ENCODE measurements at regions of chr7 and their contacts with region 1.

Region 1: GRCh38 chr7:31122649-31123058 is 70.5 kb downstream of the ADCYAP1R1 start:
- DNase-seq: peak; percentile 74 to 75
- H3K4me3 ChIP-seq: no peak overlapping the region
- H3K27ac ChIP-seq: no peak overlapping the region
- H3K4me1 ChIP-seq: peaks cover 0 to 3% (median 1%) of the 10 kb centered on the region in 4 experiments; a peak in 4 of 7 replicates
- H3K27me3 ChIP-seq: no peaks in the 10 kb centered on the region; a peak in 2 of 7 replicates
- CTCF ChIP-seq: peak; percentile 68 to 95 (median 87)
- EP300 ChIP-seq: no peak
- POLR2A ChIP-seq: no peak
- RAD21 ChIP-seq: peak; percentile 93 to 96

Region 2: GRCh38 chr7:30920584-30921539 is 201.8 kb before region 1 on chr7:
- CTCF ChIA-PET with region 1: interaction called, 10 read pairs
- POLR2A ChIA-PET with region 1: no interaction called
- DNase-seq: peak in 1 of 2 experiments; percentile 37
- H3K4me3 ChIP-seq: no peak overlapping the region
- H3K27ac ChIP-seq: no peak overlapping the region
- H3K4me1 ChIP-seq: peaks cover 0 to 3% (median 0%) of the 10 kb centered on the region in 4 experiments; a peak in 1 of 7 replicates
- H3K27me3 ChIP-seq: no peaks in the 10 kb centered on the region; a peak in 1 of 7 replicates
- CTCF ChIP-seq: no peak
- EP300 ChIP-seq: no peak
- POLR2A ChIP-seq: no peak
- RAD21 ChIP-seq: no peak

Region 3: DNA sequence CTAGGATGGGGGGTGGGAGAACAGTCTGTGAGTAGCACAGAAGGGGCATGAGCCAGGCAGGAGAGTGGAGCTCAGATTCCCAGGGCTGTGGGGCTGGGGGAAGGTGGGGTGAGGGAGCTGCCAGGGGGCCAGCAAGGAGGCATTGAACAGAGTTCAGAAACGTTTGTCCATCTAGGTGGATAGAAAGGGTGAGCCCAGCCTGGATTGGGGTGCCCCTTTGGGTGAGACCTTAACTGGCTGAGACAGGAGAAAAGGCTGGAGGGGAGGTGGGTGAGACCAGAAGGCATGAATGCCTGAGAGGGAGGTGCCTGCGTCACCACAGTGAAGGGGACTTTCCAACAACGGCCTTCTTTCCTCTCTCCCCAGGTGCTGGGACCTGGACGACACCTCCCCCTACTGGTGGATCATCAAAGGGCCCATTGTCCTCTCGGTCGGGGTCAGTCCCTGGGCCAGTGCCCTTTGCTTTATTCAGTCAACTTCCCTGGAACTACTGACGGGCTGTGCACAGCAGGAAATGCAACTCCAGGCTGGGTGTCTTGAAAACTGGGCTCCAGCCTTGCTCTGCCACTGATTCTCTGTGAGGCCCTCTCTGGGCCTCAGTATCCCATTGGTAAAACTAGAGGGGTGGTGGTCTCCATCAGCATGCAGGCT is 147.9 kb before region 1 on chr7:
- CTCF ChIA-PET with region 1: interaction called, 517 read pairs
- POLR2A ChIA-PET with region 1: no interaction called
- DNase-seq: peak; percentile 36 to 87
- H3K4me3 ChIP-seq: no peak overlapping the region
- H3K27ac ChIP-seq: no peak overlapping the region
- H3K4me1 ChIP-seq: peaks cover 0 to 7% (median 4%) of the 10 kb centered on the region in 4 experiments; a peak in 4 of 7 replicates
- H3K27me3 ChIP-seq: no peaks in the 10 kb centered on the region; a peak in 2 of 7 replicates
- CTCF ChIP-seq: peak; percentile 91 to 94 (median 91)
- EP300 ChIP-seq: peak in 1 of 2 experiments; percentile 68; a peak in 1 of 3 replicates
- POLR2A ChIP-seq: no peak
- RAD21 ChIP-seq: peak; percentile 85 to 87

Region 4: GRCh38 chr7:31027161-31027965 is 95.3 kb before region 1 on chr7:
- CTCF ChIA-PET with region 1: interaction called, 13 read pairs
- POLR2A ChIA-PET with region 1: interaction called, 3 read pairs
- DNase-seq: peak in 1 of 2 experiments; percentile 55
- H3K4me3 ChIP-seq: no peak overlapping the region
- H3K27ac ChIP-seq: no peak overlapping the region
- H3K4me1 ChIP-seq: peaks cover 3 to 14% (median 10%) of the 10 kb centered on the region in 4 experiments
- H3K27me3 ChIP-seq: no peaks in the 10 kb centered on the region
- CTCF ChIP-seq: no peak
- EP300 ChIP-seq: no peak
- POLR2A ChIP-seq: no peak
- RAD21 ChIP-seq: no peak

Region 5: DNA sequence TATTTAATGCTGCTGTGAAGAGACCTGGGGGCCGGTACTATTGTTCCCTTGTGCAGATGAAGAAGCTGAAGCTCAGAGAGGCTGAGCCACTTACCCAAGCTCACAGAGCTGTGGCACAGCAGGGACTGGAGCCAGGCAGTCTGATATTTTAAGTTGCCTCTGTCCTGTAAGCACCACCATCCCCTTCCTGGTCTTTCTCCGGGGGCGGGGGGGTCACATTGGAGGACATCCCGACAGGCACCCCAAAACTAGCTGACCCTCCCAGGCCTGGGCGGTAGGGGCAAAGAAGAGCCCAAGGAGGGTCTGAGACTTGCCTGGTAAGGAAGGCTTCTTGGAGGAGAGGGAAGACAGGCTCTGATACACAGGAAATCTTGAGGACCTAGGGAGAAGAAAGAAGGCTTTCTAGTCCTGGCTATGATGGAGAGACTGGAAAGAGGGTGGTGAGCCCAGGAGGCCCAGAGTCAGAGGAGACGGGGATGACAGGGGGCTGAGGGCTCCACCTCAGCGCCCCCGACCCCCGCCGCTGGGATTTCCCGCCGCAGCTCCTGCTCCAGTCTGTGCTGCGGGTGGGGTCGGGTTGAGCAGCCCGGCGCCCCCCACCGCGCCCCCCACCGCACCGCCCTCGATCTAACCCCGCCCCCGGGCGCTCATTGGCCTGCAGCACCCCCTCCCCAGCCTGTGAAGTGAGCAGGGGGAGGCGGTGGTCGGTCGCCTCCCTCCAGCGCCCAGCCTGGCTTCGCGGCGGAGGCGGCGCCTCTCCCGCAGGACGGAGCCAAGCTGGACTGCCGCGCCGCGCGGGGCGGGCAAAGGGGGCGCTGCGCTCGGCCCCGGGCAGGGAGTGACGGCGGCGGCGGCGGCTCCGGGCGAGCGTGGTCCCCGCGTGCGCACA is 70.8 kb before region 1 on chr7 and contains the start of gene ADCYAP1R1:
- CTCF ChIA-PET with region 1: interaction called, 215 read pairs
- POLR2A ChIA-PET with region 1: interaction called, 3 read pairs
- DNase-seq: peak in 1 of 2 experiments; percentile 77
- H3K4me3 ChIP-seq: peak within 1 kb of the TSS; percentile 63 to 85 (median 66)
- H3K27ac ChIP-seq: no peak within 1 kb of the TSS
- H3K4me1 ChIP-seq: peaks cover 1 to 17% (median 8%) of the 10 kb centered on the region in 4 experiments
- H3K27me3 ChIP-seq: peaks cover 3 to 37% (median 25%) of the 10 kb centered on the region in 4 experiments
- CTCF ChIP-seq: peak in 2 of 3 experiments; percentile 25 to 26; a peak in 2 of 4 replicates
- EP300 ChIP-seq: no peak
- POLR2A ChIP-seq: no peak
- RAD21 ChIP-seq: no peak; a peak in 1 of 4 replicates
- total RNA-seq, gene ADCYAP1R1: 13.7 and 14.6 TPM in 2 replicates

Region 6: GRCh38 chr7:31074120-31074383 is 48.6 kb before region 1 on chr7:
- CTCF ChIA-PET with region 1: interaction called, 29 read pairs
- POLR2A ChIA-PET with region 1: no interaction called
- DNase-seq: no peak
- H3K4me3 ChIP-seq: no peak overlapping the region
- H3K27ac ChIP-seq: no peak overlapping the region
- H3K4me1 ChIP-seq: no peaks in the 10 kb centered on the region; a peak in 1 of 7 replicates
- H3K27me3 ChIP-seq: no peaks in the 10 kb centered on the region
- CTCF ChIP-seq: no peak
- EP300 ChIP-seq: no peak
- POLR2A ChIP-seq: no peak
- RAD21 ChIP-seq: no peak